Colonic mucosa (tissue), 4 donors: ENCODE measurements at regions of chr19 and their contacts with region 1.

Region 1: DNA sequence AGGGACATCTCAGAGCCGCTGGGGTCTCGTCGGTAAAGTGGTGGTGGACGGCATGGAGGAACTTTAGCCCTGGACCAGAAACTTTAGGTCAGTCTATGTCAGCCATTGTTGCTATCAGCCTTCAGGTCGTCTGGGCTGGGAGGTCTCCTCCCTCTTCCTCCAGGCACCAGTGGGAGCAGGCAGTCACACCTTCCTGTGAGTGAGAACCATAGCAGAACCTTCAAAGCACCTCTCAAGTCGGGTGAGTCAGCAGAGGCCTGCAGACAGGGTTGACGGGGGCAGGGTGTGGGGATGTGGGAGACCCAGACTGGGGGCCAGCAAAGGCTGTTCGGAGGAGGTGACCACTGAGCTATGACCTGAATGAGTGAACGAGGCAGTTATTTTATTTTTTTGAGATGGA is 15.4 kb upstream of the SBNO2 start:
- DNase-seq: no peak
- H3K4me3 ChIP-seq: no peak overlapping the region
- H3K27ac ChIP-seq: no peak overlapping the region
- H3K4me1 ChIP-seq: no peaks in the 10 kb centered on the region
- H3K27me3 ChIP-seq: no peaks in the 10 kb centered on the region
- CTCF ChIP-seq: no peak

Region 2: GRCh38 chr19:1113033-1113985 is 76.1 kb before region 1 on chr19:
- intact Hi-C with region 1: loop called (anchors 5 kb)
- DNase-seq: peak; percentile 99
- H3K4me3 ChIP-seq: no peak overlapping the region
- H3K27ac ChIP-seq: peak overlapping the region; percentile 76
- H3K4me1 ChIP-seq: peaks cover 17% of the 10 kb centered on the region
- H3K27me3 ChIP-seq: no peaks in the 10 kb centered on the region
- CTCF ChIP-seq: peak; percentile 87

Region 3: DNA sequence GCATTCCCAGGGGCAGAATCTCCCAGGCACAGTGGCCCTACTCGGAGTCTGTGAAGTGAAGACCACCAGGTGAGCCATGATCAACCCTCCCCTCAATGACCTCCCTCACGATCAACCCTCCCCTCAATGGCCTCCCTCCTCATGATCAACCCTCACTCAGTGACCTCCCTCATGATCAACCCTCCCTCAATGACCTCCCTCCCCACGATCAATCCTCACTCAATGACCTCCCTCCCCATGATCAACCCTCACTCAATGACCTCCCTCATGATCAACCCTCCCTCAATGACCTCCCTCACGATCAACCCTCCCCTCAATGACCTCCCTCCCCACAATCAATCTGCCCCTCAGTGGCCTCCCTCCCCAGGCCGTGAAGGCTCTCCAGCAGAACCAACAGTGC is 47.5 kb before region 1 on chr19:
- intact Hi-C with region 1: no loop called
- DNase-seq: no peak
- H3K4me3 ChIP-seq: no peak overlapping the region
- H3K27ac ChIP-seq: no peak overlapping the region
- H3K4me1 ChIP-seq: no peaks in the 10 kb centered on the region
- H3K27me3 ChIP-seq: no peaks in the 10 kb centered on the region
- CTCF ChIP-seq: no peak